ENCODE measurements at regions of chr2 and their contacts with region 1.

Region 1: DNA sequence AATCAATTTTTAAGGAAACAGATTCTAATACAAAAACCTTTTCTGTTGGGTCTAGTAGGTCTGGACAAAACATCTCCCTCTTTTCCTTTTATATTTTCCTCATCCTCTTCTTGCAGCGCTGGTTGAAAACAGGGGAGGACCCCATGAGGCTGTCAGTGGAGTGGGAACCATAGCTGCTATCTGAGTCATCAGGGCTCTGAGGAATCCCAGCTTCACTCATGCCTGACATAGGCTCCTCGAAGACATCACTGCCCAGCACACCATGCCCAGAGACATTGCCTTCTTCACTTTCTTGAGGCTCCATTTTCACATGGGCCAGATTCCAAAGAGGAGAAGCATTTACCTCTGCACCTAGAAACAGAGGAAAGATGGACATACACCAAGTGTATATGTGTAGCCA is 10.0 kb downstream of the SUPT7L start:
- DNase-seq: no peak
- H3K4me3 Mint-ChIP-seq: no peak overlapping the region
- H3K27ac Mint-ChIP-seq: no peak overlapping the region
- H3K4me1 Mint-ChIP-seq: peaks cover 2% of the 10 kb centered on the region
- H3K27me3 Mint-ChIP-seq: no peaks in the 10 kb centered on the region

Region 2: DNA sequence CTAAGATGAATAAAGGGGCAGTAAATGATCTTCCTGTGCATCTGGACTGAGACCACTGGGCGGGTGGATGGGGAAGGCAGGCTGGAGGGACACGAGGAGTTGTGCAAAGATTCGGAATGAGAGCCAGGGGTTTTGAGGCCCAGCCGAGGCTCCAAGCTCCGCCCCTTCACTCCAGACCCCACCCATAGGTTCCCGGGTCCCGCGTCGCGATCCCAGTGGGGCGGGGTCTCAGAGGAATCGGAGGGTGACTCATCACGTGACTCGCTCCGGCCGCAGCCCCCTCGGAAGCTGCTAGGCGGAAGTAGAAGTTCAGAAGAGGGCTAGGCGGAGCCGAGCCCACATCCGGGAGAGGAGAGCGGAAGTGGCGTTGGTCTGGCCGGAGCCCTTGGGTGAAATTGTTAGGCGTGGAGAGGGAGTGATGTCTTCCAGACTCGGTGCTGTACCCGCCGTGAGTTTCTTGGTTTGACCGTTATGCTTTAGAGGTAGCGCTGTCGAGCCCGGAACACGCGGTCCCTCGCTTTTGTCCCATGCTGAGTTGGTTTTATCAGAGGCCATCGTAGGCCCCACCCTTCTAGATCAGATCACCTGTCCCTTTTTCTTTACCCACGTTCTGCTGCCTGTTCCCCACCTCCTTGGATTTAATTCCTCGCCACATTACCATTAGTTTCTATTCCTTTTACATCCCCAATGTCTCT is 70.6 kb before region 1 on chr2 and contains the start of gene ZNF512:
- CTCF ChIA-PET with region 1: no interaction called
- POLR2A ChIA-PET with region 1: no interaction called
- DNase-seq: peak; percentile 85
- H3K4me3 Mint-ChIP-seq: peak within 1 kb of the TSS; percentile 92
- H3K27ac Mint-ChIP-seq: peak within 1 kb of the TSS; percentile 93
- H3K4me1 Mint-ChIP-seq: peaks cover 53% of the 10 kb centered on the region
- H3K27me3 Mint-ChIP-seq: peaks cover 4% of the 10 kb centered on the region
- total RNA-seq, gene ZNF512: 42.3 to 51.5 TPM

Region 3: DNA sequence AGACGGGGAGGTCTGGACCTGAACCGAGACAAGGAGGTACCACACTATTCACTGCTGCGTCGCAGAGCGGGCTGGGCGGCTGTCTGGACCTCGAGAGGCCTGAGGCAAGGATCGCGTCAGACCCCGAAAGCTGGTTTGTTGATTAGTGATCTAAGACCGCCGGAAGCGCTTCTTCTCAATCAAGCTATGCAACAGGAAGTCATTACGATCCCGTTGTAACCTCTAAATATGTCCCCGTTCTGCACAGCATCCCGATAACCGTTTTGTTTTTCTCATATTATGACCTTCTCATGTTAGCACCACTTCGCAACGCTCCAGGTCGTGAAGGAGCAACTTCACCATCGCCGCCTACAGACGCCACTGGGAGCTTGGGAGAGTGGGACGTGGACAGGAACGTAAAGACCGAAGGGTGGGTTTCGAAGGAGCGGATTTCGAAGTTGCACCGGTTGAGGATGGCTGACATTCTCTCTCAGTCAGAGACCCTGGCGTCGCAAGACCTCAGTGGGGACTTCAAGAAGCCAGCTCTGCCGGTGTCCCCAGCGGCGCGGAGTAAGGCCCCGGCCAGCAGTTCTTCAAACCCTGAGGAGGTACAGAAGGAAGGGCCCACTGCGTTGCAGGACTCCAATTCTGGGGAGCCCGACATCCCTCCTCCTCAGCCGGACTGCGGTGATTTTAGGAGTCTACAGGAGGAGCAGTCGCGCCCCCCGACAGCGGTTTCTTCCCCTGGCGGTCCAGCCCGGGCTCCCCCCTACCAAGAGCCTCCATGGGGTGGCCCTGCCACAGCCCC is 10.3 kb after region 1 on chr2 and contains the starts of genes SLC4A1AP and SUPT7L:
- CTCF ChIA-PET with region 1: interaction called, 10 read pairs
- POLR2A ChIA-PET with region 1: no interaction called
- DNase-seq: peak; percentile 78
- H3K4me3 Mint-ChIP-seq: peak within 1 kb of the TSS; percentile 100
- H3K27ac Mint-ChIP-seq: peak within 1 kb of the TSS; percentile 100
- H3K4me1 Mint-ChIP-seq: peaks cover 47% of the 10 kb centered on the region
- H3K27me3 Mint-ChIP-seq: no peaks in the 10 kb centered on the region
- total RNA-seq, gene SLC4A1AP: 22.7 to 23.5 TPM
- total RNA-seq, gene SUPT7L: 34.5 to 36.2 TPM

Measured in activated CD4-positive, alpha-beta T cell treated with anti-CD3 and anti-CD28 coated beads, Interleukin-2, amount 10 ng/mL, durations not matched to agents 7 days and 5 days (primary cell).